ENCODE measurements at regions of chr10 and their contacts with region 1.

Region 1: GRCh38 chr10:23067939-23068775 is 27.2 kb upstream of the MSRB2 start:
- DNase-seq: peak; percentile 62 to 72
- ATAC-seq: peak; percentile 46 to 76 (median 72)
- H3K4me3 ChIP-seq: no peak overlapping the region
- H3K27ac ChIP-seq: no peak overlapping the region
- H3K4me1 ChIP-seq: peaks cover 5 to 29% (median 18%) of the 10 kb centered on the region in 9 donors
- H3K27me3 ChIP-seq: no peaks in the 10 kb centered on the region
- CTCF ChIP-seq: peak; percentile 66 to 84 (median 77)

Region 2: GRCh38 chr10:21989453-21990154 is 1078.6 kb before region 1 on chr10:
- intact Hi-C with region 1: loop called in 1 of 10 experiments (anchors 5 kb)
- DNase-seq: peak; percentile 19 to 21
- ATAC-seq: peak; percentile 79 to 96 (median 90)
- H3K4me3 ChIP-seq: no peak overlapping the region
- H3K27ac ChIP-seq: no peak overlapping the region
- H3K4me1 ChIP-seq: peaks cover 0 to 13% (median 6%) of the 10 kb centered on the region in 9 donors
- H3K27me3 ChIP-seq: no peaks in the 10 kb centered on the region
- CTCF ChIP-seq: peak; percentile 10 to 66 (median 46)

Region 3: DNA sequence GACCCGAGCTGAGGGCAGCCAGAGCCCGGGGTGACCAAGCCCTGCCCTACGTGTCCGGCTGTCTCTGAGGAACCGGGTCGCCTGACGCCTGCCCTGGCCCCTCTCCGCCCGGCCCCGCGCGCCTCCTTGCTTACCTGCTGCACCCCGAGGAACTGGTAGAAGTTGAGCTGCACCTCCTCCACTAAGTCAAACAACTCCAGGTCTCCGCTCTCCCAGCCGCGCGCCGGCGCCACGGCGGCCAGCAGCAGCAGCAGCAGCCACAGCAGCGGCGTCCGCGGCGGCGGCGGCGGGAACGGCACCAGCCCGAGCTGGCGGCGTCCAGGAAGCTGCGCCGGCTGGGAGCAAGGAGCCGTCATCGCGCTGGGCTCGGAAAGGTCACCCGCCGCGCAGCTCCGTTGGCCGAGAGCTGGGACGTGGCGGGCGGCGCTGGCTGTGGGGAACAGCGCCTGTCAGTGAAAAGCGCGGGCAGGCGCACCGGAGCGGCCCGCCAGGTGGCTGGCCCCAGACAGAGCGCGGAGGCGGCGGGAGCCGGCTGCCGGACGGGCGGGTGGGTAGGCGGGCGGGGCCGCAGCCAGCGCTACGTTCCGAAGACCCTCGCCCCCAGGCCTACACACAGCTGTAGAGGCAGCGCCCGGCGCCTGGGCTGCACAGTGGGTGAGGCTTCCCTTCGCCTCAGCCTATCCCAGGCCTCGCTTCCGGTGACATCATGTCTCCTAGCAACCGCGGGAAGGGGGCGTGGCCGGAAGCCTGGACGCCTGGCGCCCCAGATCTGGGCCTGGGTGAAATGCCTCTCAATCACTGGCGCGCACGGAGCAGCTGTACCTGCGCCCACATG is 1064.9 kb before region 1 on chr10 and contains the start of gene DNAJC1:
- intact Hi-C with region 1: loop called in 2 of 10 experiments (anchors 10 kb)
- DNase-seq: peak; percentile 98 to 99
- ATAC-seq: peak; percentile 99 to 100 (median 100)
- H3K4me3 ChIP-seq: peak within 1 kb of the TSS; percentile 52 to 94 (median 80)
- H3K27ac ChIP-seq: peak within 1 kb of the TSS; percentile 72 to 98 (median 94)
- H3K4me1 ChIP-seq: peaks cover 0 to 28% (median 16%) of the 10 kb centered on the region in 9 donors
- H3K27me3 ChIP-seq: no peaks in the 10 kb centered on the region
- CTCF ChIP-seq: peak in 4 of 9 donors; percentile 5 to 21 (median 11)
- total RNA-seq, gene DNAJC1: 8.9 to 18.1 (median 11.4) TPM

Region 4: GRCh38 chr10:22010973-22011408 is 1057.2 kb before region 1 on chr10:
- intact Hi-C with region 1: loop called in 3 of 10 experiments (anchors 10 kb)
- DNase-seq: no peak
- ATAC-seq: no peak
- H3K4me3 ChIP-seq: no peak overlapping the region
- H3K27ac ChIP-seq: no peak overlapping the region
- H3K4me1 ChIP-seq: peaks cover 0 to 10% (median 0%) of the 10 kb centered on the region in 9 donors
- H3K27me3 ChIP-seq: no peaks in the 10 kb centered on the region
- CTCF ChIP-seq: peak; percentile 38 to 68 (median 61)

Region 5: GRCh38 chr10:22615819-22616499 is 452.2 kb before region 1 on chr10:
- intact Hi-C with region 1: loop called in 1 of 10 experiments (anchors 10 kb)
- DNase-seq: peak in 1 of 2 donors; percentile 38
- ATAC-seq: peak; percentile 25 to 60 (median 48)
- H3K4me3 ChIP-seq: peak overlapping the region in 1 of 10 donors; percentile 32
- H3K27ac ChIP-seq: peak overlapping the region in 8 of 10 donors; percentile 17 to 83 (median 59)
- H3K4me1 ChIP-seq: peaks cover 7 to 93% (median 54%) of the 10 kb centered on the region in 9 donors
- H3K27me3 ChIP-seq: no peaks in the 10 kb centered on the region
- CTCF ChIP-seq: no peak

Region 6: GRCh38 chr10:23035569-23035968 is 32.6 kb before region 1 on chr10:
- intact Hi-C with region 1: no loop called
- DNase-seq: no peak
- ATAC-seq: no peak
- H3K4me3 ChIP-seq: no peak overlapping the region
- H3K27ac ChIP-seq: no peak overlapping the region
- H3K4me1 ChIP-seq: peaks cover 0 to 10% (median 0%) of the 10 kb centered on the region in 9 donors
- H3K27me3 ChIP-seq: peaks cover 0 to 3% (median 0%) of the 10 kb centered on the region in 7 donors
- CTCF ChIP-seq: peak in 4 of 9 donors; percentile 3 to 26 (median 10)

Region 7: GRCh38 chr10:23253780-23254179 is 185.6 kb after region 1 on chr10:
- intact Hi-C with region 1: no loop called
- DNase-seq: no peak
- ATAC-seq: no peak
- H3K4me3 ChIP-seq: no peak overlapping the region
- H3K27ac ChIP-seq: no peak overlapping the region
- H3K4me1 ChIP-seq: no peaks in the 10 kb centered on the region
- H3K27me3 ChIP-seq: peaks cover 0 to 3% (median 0%) of the 10 kb centered on the region in 7 donors
- CTCF ChIP-seq: no peak